HepG2 (cell line): ENCODE measurements at regions of chrX and their contacts with region 1.

Region 1: GRCh38 chrX:45972636-45973035 is 572.6 kb downstream of the ZNF674 start:
- DNase-seq: no peak
- ATAC-seq: no peak
- H3K4me3 ChIP-seq: no peak overlapping the region
- H3K27ac ChIP-seq: no peak overlapping the region
- H3K4me1 ChIP-seq: peaks cover 10% of the 10 kb centered on the region; the same call in 1 of the 2 replicates
- H3K27me3 ChIP-seq: no peaks in the 10 kb centered on the region
- CTCF ChIP-seq: no peak
- EP300 ChIP-seq: no peak
- POLR2A ChIP-seq: no peak
- RAD21 ChIP-seq: no peak

Region 2: GRCh38 chrX:45992402-45993123 is 19.9 kb after region 1 on chrX:
- CTCF ChIA-PET with region 1: no interaction called
- POLR2A ChIA-PET with region 1: no interaction called
- in situ Hi-C with region 1: no loop called
- intact Hi-C with region 1: loop called (anchors 1 kb)
- DNase-seq: no peak
- ATAC-seq: no peak
- H3K4me3 ChIP-seq: no peak overlapping the region
- H3K27ac ChIP-seq: no peak overlapping the region
- H3K4me1 ChIP-seq: no peaks in the 10 kb centered on the region
- H3K27me3 ChIP-seq: no peaks in the 10 kb centered on the region
- CTCF ChIP-seq: no peak
- EP300 ChIP-seq: no peak
- POLR2A ChIP-seq: no peak
- RAD21 ChIP-seq: no peak

Region 3: DNA sequence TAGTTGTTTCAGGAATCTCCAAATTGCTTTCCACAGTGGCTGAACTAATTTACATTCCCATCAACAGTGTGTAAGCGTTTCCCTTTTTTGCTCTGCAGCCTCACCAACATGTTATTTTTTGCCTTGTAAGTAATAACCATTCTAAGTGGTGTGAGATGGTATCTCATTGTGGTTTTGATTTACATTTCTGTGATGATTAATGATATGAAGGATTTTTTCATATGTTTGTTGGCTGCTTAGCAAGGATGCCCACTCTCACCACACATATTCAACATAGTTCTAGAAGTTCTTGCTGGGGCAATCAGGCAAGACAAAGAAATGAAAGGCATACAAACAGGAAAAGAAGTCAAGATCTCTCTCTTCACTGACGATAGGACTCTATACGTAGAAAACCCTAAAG is 100.2 kb after region 1 on chrX:
- CTCF ChIA-PET with region 1: no interaction called
- POLR2A ChIA-PET with region 1: no interaction called
- in situ Hi-C with region 1: no loop called
- intact Hi-C with region 1: no loop called
- DNase-seq: no peak
- ATAC-seq: no peak
- H3K4me3 ChIP-seq: no peak overlapping the region
- H3K27ac ChIP-seq: no peak overlapping the region
- H3K4me1 ChIP-seq: no peaks in the 10 kb centered on the region
- H3K27me3 ChIP-seq: no peaks in the 10 kb centered on the region
- CTCF ChIP-seq: no peak
- EP300 ChIP-seq: no peak
- POLR2A ChIP-seq: no peak
- RAD21 ChIP-seq: no peak